CD4-positive, alpha-beta memory T cell (primary cell): ENCODE measurements at regions of chr15 and their contacts with region 1.

Region 1: DNA sequence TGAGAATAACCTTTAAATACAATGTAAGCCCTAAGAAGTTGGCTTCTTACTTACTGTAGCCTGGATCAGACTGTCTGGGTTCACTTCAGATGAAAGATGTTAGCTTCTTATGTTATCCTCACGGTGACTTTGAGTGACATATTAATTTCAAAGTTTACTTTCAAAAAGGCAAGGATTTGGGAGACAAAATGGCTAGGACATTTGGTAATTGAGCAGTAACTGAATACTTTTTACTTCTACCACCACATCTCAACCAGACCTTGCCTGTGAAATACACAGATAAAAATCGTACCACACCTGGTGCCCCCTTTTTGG is 36.0 kb upstream of the BNIP2 start:
- DNase-seq: no peak
- H3K4me3 ChIP-seq: no peak overlapping the region
- H3K4me3 Mint-ChIP-seq: no peak overlapping the region
- H3K27ac ChIP-seq: no peak overlapping the region
- H3K27ac Mint-ChIP-seq: no peak overlapping the region
- H3K4me1 ChIP-seq: peaks cover 3% of the 10 kb centered on the region
- H3K4me1 Mint-ChIP-seq: peaks cover 0 to 2% (median 0%) of the 10 kb centered on the region in 4 donors
- H3K27me3 ChIP-seq: peaks cover 4% of the 10 kb centered on the region
- H3K27me3 Mint-ChIP-seq: peaks cover 8 to 17% of the 10 kb centered on the region in 2 donors

Region 2: DNA sequence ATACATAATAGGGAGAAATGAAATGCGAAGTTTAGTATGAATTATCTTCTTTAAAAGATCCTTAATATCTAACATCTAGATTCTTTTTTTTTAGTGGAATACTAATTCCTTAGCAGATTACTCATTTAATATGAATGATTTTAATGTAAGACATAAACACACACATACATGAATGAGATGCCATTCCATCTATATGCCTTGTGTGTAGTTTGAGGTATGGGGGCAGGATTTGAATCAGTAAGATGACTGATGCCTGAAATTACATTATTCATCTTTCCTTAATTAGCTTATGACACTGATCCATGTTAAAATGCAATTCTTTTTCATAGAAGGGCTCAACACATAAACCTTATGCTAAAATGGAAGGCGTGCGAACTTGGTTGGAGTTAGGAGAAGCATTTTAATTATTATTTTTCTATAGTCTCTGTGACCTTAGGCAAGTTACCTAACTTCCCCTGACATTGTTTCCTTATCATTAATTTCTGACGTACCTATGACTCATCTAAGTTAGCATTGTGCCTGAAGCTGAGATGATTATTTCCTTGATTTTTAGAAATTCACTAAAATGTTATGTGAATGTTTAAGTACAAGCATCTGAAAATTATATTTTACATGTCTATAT is 25.2 kb before region 1 on chr15:
- CTCF ChIA-PET with region 1: no interaction called
- POLR2A ChIA-PET with region 1: no interaction called
- intact Hi-C with region 1: no loop called
- DNase-seq: no peak
- H3K4me3 ChIP-seq: no peak overlapping the region
- H3K4me3 Mint-ChIP-seq: no peak overlapping the region
- H3K27ac ChIP-seq: no peak overlapping the region
- H3K27ac Mint-ChIP-seq: no peak overlapping the region
- H3K4me1 ChIP-seq: no peaks in the 10 kb centered on the region
- H3K4me1 Mint-ChIP-seq: no peaks in the 10 kb centered on the region
- H3K27me3 ChIP-seq: no peaks in the 10 kb centered on the region
- H3K27me3 Mint-ChIP-seq: peaks cover 2 to 3% of the 10 kb centered on the region in 2 donors

Region 3: DNA sequence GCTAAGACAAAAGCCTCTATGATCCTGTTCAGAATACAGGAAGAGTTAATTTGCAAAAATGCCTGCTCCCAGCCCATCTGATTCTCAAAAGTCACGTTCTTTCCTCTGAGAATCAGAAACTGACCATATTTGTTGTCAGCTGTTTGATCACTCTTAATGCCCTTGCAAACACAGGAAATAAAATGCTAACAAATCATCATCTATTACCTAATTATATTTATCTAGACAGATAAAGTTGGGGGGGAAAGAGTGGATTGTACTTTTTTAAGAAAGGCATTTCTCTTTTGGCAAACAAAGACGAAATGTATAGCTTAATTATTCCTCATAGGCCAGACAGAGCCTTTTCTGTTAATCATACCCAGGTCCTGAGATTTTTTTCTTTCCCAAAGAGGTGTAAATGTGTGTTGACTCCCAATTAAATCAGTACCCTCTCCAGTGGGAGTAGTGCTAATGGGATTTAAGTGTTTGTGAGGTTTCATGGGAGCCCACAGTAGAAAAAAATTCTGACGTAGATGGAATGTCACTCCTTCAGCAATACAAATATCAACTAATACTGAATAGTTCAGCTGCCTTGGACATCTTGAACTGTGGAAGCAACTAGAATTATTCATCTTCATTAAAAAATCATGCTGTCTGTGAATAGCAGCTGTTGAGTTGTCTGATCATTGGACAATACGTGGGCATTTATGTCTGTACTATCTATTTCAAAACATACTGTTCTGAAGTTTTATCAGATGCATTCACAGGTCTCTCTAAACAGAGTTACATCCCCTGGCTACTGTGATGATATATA is 13.5 kb before region 1 on chr15:
- CTCF ChIA-PET with region 1: interaction called, 12 read pairs
- POLR2A ChIA-PET with region 1: no interaction called
- intact Hi-C with region 1: no loop called
- DNase-seq: no peak
- H3K4me3 ChIP-seq: no peak overlapping the region
- H3K4me3 Mint-ChIP-seq: no peak overlapping the region
- H3K27ac ChIP-seq: no peak overlapping the region
- H3K27ac Mint-ChIP-seq: no peak overlapping the region
- H3K4me1 ChIP-seq: no peaks in the 10 kb centered on the region
- H3K4me1 Mint-ChIP-seq: no peaks in the 10 kb centered on the region
- H3K27me3 ChIP-seq: no peaks in the 10 kb centered on the region
- H3K27me3 Mint-ChIP-seq: peaks cover 0 to 4% of the 10 kb centered on the region in 2 donors

Region 4: GRCh38 chr15:60128000-60128376 is 402.9 kb after region 1 on chr15:
- CTCF ChIA-PET with region 1: interaction called, 11 read pairs
- POLR2A ChIA-PET with region 1: no interaction called
- intact Hi-C with region 1: no loop called
- DNase-seq: no peak
- H3K4me3 ChIP-seq: peak overlapping the region; percentile 56 to 81
- H3K4me3 Mint-ChIP-seq: peak overlapping the region; percentile 74 to 94 (median 92)
- H3K27ac ChIP-seq: peak overlapping the region; percentile 58
- H3K27ac Mint-ChIP-seq: peak overlapping the region; percentile 92 to 97 (median 96)
- H3K4me1 ChIP-seq: peaks cover 28% of the 10 kb centered on the region
- H3K4me1 Mint-ChIP-seq: peaks cover 19 to 45% (median 33%) of the 10 kb centered on the region in 4 donors
- H3K27me3 ChIP-seq: no peaks in the 10 kb centered on the region
- H3K27me3 Mint-ChIP-seq: no peaks in the 10 kb centered on the region

Region 5: DNA sequence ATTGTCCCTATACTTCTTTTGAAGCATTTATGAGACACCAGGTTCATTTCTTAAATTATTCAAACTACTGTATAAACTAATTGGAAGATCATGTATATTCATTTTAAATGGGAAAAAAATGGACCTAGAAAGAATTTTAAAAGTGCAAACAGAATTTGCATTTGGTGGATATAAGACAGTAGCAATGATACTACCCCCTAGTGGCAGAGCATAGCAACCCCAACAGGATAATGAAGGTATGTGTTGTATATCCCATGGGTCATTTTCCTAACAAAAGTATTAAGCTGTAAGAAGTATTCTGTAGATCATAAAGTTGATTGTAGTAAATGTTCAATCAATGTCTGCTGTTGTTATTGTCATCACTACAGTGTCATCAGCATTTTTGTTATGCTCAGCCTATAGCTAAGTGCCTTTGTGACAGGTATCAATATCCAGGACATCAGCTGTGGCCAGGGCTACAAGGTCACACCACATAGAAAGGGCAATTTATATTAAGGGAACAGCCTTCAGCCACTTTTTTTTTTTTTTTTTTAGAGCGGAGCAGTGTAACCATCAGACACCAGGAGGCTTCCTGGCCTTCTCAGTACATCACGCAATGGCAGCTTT is 454.8 kb after region 1 on chr15:
- CTCF ChIA-PET with region 1: interaction called, 8 read pairs
- POLR2A ChIA-PET with region 1: no interaction called
- intact Hi-C with region 1: loop called (anchors 1 kb)
- DNase-seq: peak; percentile 35 to 51 (median 45)
- H3K4me3 ChIP-seq: no peak overlapping the region
- H3K4me3 Mint-ChIP-seq: no peak overlapping the region
- H3K27ac ChIP-seq: no peak overlapping the region
- H3K27ac Mint-ChIP-seq: no peak overlapping the region
- H3K4me1 ChIP-seq: no peaks in the 10 kb centered on the region
- H3K4me1 Mint-ChIP-seq: no peaks in the 10 kb centered on the region
- H3K27me3 ChIP-seq: no peaks in the 10 kb centered on the region
- H3K27me3 Mint-ChIP-seq: peaks cover 8 to 18% of the 10 kb centered on the region in 2 donors

Region 6: DNA sequence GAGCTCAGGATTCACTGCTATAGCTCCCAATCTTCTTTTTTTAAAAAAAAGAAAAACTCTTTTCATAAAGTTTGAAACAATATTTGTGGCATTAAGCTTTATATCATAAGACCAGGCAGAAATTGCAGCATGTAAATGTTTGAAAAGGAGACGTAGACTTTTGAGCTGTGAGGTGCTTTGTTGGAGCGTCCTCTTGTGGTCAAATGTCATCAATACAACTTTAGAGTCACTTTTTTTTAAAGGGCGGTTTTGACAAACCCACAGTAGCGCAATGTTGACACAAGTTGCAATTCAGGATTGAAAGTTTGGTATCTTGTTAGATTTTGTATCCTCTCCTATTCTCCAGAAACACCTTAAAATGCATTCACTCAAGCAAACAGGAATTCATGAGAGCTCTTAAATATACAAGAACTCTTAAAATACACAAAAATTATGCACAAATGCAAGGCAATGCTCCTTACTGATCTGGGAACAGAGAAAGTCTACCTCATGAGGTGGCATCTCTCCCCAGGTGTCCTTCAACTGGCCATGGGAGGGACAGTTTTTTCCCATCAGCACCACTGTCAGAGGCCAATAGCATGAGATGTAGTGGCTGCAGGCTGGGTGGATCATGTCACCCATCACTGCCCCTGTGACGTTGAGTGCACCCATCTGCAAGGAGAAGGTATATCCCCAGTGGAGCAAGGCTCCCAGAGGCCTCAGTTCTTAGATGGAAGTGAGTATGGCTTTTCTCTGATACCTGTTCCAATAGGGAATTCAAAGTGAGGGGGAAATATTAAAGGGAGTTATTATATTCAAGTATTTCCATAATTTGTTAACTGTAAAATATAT is 601.9 kb after region 1 on chr15:
- CTCF ChIA-PET with region 1: interaction called, 36 read pairs
- POLR2A ChIA-PET with region 1: no interaction called
- intact Hi-C with region 1: loop called (anchors 1 kb)
- DNase-seq: peak in 4 of 5 donors; percentile 55 to 58 (median 57)
- H3K4me3 ChIP-seq: no peak overlapping the region
- H3K4me3 Mint-ChIP-seq: no peak overlapping the region
- H3K27ac ChIP-seq: no peak overlapping the region
- H3K27ac Mint-ChIP-seq: no peak overlapping the region
- H3K4me1 ChIP-seq: no peaks in the 10 kb centered on the region
- H3K4me1 Mint-ChIP-seq: peaks cover 2 to 7% (median 6%) of the 10 kb centered on the region in 4 donors
- H3K27me3 ChIP-seq: peaks cover 23% of the 10 kb centered on the region
- H3K27me3 Mint-ChIP-seq: peaks cover 18 to 27% of the 10 kb centered on the region in 2 donors